MCF 10A (cell line): ENCODE measurements at regions of chr11 and their contacts with region 1.

Region 1: GRCh38 chr11:113532697-113533424 is 57.7 kb upstream of the DRD2 start:
- DNase-seq: peak; percentile 77
- H3K4me3 Mint-ChIP-seq: no peak overlapping the region
- H3K27ac Mint-ChIP-seq: no peak overlapping the region
- H3K4me1 Mint-ChIP-seq: peaks cover 20% of the 10 kb centered on the region
- H3K27me3 Mint-ChIP-seq: no peaks in the 10 kb centered on the region
- CTCF ChIP-seq: peak; percentile 89

Region 2: DNA sequence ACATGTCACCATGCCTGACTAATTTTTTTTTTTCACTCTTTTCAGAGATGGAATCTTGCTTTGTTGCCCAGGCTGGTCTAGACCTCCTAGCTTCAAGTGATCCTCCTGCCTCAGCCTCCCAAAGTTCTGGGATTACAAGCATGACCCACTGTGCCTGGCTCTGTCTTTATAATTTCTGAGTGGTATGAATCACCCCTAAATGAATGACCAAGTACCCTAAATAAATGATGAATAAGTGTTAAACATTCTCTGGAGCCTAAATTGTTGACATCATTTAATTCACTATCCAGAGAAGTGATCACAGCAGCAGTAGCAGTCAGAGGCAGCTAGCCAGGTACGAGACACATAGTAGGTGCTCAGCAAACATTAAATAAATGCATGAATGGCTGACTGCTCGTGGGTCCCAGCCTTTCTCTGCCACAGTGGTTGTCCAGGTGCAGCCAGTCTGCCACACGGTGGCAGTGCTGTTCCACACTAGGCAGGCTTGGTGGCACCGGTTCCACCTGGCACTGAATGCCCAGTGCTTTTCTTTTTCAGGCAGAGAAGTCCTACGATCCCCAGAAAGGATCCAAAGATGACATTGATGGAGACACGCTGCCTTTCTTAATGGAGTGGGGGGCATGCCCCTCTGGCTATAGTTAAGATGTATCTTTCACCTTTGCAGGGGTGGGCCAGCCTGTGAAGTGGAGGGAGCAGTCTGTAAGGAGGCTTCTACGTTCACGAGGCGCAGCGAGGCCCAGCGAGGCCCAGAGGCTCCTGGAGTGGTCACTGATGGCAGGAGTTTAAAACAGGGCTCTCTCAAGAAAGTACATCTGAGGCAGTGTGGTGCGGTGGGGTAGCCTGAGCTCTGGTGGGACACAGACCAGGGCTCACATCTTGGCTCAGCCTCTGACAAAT is 227.2 kb before region 1 on chr11:
- CTCF ChIA-PET with region 1: interaction called, 43 read pairs
- POLR2A ChIA-PET with region 1: interaction called, 3 read pairs
- intact Hi-C with region 1: loop called (anchors 1 kb)
- DNase-seq: peak; percentile 79
- H3K4me3 Mint-ChIP-seq: no peak overlapping the region
- H3K27ac Mint-ChIP-seq: no peak overlapping the region
- H3K4me1 Mint-ChIP-seq: peaks cover 5% of the 10 kb centered on the region
- H3K27me3 Mint-ChIP-seq: peaks cover 13% of the 10 kb centered on the region
- CTCF ChIP-seq: peak; percentile 98

Region 3: DNA sequence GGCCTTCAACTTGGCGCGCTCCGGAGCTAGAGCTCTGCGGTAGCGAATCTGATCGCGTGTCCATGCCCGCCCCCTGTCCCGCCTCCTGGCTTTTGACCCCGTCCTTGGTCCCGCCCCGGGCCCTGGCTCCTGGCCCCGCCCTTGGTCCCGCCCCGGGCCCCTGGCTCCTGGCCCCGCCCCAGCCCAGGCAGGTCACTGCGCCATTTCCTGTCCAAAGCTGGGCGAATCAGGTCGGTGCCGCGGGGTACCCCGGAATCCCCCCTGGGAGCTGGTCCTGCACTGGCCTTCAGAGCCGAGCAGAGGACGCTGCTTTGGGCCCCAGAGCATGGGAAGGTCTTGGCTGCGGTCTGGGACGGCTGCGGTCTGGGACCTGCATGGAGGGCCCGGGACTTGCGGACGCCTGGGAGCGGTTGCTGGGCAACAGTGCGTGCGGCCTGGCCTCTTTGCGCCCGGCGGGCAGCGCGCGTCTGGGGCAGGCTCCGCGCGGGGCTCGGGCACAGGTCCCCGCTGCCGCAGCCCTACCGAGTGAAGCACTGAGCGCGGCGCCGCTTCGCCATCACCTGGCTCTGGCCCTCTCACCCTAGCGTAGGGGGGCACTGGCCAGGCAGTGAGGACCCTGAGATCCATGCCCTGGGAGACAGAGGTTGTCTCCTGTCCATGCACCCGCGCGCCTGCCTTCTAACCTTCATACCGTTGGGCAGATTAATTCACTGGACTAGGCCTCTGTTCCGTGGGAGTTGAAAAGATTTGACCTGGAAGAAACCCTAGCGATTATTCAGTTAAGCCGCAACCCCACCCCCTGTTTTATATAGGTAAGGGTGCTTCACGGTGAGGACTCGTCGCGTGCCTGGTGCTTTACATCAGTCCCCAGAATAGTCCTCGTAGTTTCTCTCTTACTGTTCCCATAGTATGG is 218.2 kb before region 1 on chr11 and contains the start of gene TTC12:
- CTCF ChIA-PET with region 1: interaction called, 28 read pairs
- POLR2A ChIA-PET with region 1: interaction called, 3 read pairs
- intact Hi-C with region 1: no loop called
- DNase-seq: peak; percentile 92
- H3K4me3 Mint-ChIP-seq: peak within 1 kb of the TSS; percentile 80
- H3K27ac Mint-ChIP-seq: peak within 1 kb of the TSS; percentile 87
- H3K4me1 Mint-ChIP-seq: peaks cover 19% of the 10 kb centered on the region
- H3K27me3 Mint-ChIP-seq: no peaks in the 10 kb centered on the region
- CTCF ChIP-seq: no peak
- total RNA-seq, gene TTC12: 30.5 and 41.3 TPM in 2 replicates

Region 4: GRCh38 chr11:113519989-113520613 is 12.8 kb before region 1 on chr11:
- CTCF ChIA-PET with region 1: interaction called, 36 read pairs
- POLR2A ChIA-PET with region 1: interaction called, 5 read pairs
- intact Hi-C with region 1: no loop called
- DNase-seq: no peak
- H3K4me3 Mint-ChIP-seq: no peak overlapping the region
- H3K27ac Mint-ChIP-seq: no peak overlapping the region
- H3K4me1 Mint-ChIP-seq: no peaks in the 10 kb centered on the region
- H3K27me3 Mint-ChIP-seq: no peaks in the 10 kb centered on the region
- CTCF ChIP-seq: no peak

Region 5: GRCh38 chr11:115244758-115245157 is 1711.9 kb after region 1 on chr11:
- CTCF ChIA-PET with region 1: no interaction called
- POLR2A ChIA-PET with region 1: no interaction called
- intact Hi-C with region 1: no loop called
- DNase-seq: no peak
- H3K4me3 Mint-ChIP-seq: no peak overlapping the region
- H3K27ac Mint-ChIP-seq: no peak overlapping the region
- H3K4me1 Mint-ChIP-seq: no peaks in the 10 kb centered on the region
- H3K27me3 Mint-ChIP-seq: no peaks in the 10 kb centered on the region
- CTCF ChIP-seq: no peak